Heart left ventricle (tissue), 16 donors: ENCODE measurements at regions of chr2 and their contacts with region 1.

Region 1: GRCh38 chr2:119753041-119753929 is 6.4 kb upstream of the PTPN4 start:
- DNase-seq: no peak
- ATAC-seq: peak; percentile 58 to 72 (median 61)
- H3K4me3 ChIP-seq: no peak overlapping the region
- H3K27ac ChIP-seq: no peak overlapping the region
- H3K4me1 ChIP-seq: peaks cover 0 to 10% (median 1%) of the 10 kb centered on the region in 12 donors
- H3K27me3 ChIP-seq: no peaks in the 10 kb centered on the region
- CTCF ChIP-seq: peak; percentile 67 to 86 (median 79)
- POLR2A ChIP-seq: no peak

Region 2: DNA sequence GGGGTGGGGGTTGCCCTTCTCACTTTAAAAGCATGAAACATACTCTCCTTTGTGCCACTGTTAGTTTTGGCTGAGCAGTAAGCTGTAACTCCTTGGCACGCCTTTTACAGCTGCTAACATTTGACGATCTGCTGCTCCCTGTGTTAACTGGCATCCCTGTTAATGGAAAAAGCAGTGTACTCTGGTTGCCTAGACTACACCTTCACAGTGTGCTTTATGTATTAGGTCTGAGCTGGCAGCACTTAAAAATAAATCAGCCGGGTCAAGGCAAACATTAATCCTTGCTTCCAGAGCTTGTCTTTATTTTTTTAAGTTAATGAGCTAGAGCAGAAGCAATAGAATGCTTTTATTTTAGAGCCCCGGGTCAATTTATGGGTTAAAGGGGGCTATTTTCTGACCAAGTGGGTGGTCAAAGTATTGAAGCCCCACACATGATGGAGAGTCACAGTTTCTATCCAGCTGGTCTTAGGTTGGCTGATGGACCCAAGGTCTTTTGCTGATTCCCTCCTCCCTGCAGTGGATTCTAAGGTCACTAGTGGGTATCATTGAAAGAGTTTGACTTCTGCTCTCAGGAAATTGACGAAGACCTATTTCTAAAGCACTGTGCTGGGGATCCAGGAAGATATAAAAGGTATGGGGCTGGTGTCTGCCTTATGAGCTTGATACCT is 154.6 kb before region 1 on chr2:
- intact Hi-C with region 1: no loop called
- DNase-seq: no peak
- ATAC-seq: peak; percentile 73 to 88 (median 76)
- H3K4me3 ChIP-seq: no peak overlapping the region
- H3K27ac ChIP-seq: peak overlapping the region in 8 of 12 donors; percentile 29 to 82 (median 64)
- H3K4me1 ChIP-seq: peaks cover 0 to 36% (median 2%) of the 10 kb centered on the region in 12 donors
- H3K27me3 ChIP-seq: no peaks in the 10 kb centered on the region
- CTCF ChIP-seq: no peak
- POLR2A ChIP-seq: no peak

Region 3: GRCh38 chr2:119702918-119703401 is 50.3 kb before region 1 on chr2:
- intact Hi-C with region 1: loop called in 2 of 10 experiments (anchors 5 to 10 kb)
- DNase-seq: peak; percentile 64 to 86 (median 66)
- ATAC-seq: peak; percentile 79 to 91 (median 90)
- H3K4me3 ChIP-seq: no peak overlapping the region
- H3K27ac ChIP-seq: no peak overlapping the region
- H3K4me1 ChIP-seq: peaks cover 0 to 25% (median 3%) of the 10 kb centered on the region in 12 donors
- H3K27me3 ChIP-seq: no peaks in the 10 kb centered on the region
- CTCF ChIP-seq: peak; percentile 85 to 96 (median 92)
- POLR2A ChIP-seq: no peak

Region 4: GRCh38 chr2:119721462-119721861 is 31.8 kb before region 1 on chr2:
- intact Hi-C with region 1: no loop called
- DNase-seq: peak in 3 of 5 donors; percentile 27 to 56 (median 27)
- ATAC-seq: peak; percentile 88 to 96 (median 92)
- H3K4me3 ChIP-seq: no peak overlapping the region
- H3K27ac ChIP-seq: peak overlapping the region in 6 of 12 donors; percentile 5 to 45 (median 22)
- H3K4me1 ChIP-seq: peaks cover 0 to 7% (median 0%) of the 10 kb centered on the region in 12 donors
- H3K27me3 ChIP-seq: no peaks in the 10 kb centered on the region
- CTCF ChIP-seq: peak in 6 of 12 donors; percentile 7 to 36 (median 24)
- POLR2A ChIP-seq: no peak

Region 5: GRCh38 chr2:119826370-119826961 is 73.2 kb after region 1 on chr2:
- intact Hi-C with region 1: loop called (anchors 1 to 5 kb)
- DNase-seq: no peak
- ATAC-seq: peak in 3 of 4 donors; percentile 62 to 70 (median 64)
- H3K4me3 ChIP-seq: no peak overlapping the region
- H3K27ac ChIP-seq: no peak overlapping the region
- H3K4me1 ChIP-seq: peaks cover 0 to 14% (median 5%) of the 10 kb centered on the region in 12 donors
- H3K27me3 ChIP-seq: no peaks in the 10 kb centered on the region
- CTCF ChIP-seq: peak; percentile 40 to 66 (median 52)
- POLR2A ChIP-seq: no peak

Region 6: GRCh38 chr2:119943058-119943457 is 189.8 kb after region 1 on chr2:
- intact Hi-C with region 1: loop called in 3 of 10 experiments (anchors 5 to 10 kb)
- DNase-seq: no peak
- ATAC-seq: peak in 2 of 4 donors; percentile 11 to 54
- H3K4me3 ChIP-seq: no peak overlapping the region
- H3K27ac ChIP-seq: no peak overlapping the region
- H3K4me1 ChIP-seq: peaks cover 0 to 18% (median 2%) of the 10 kb centered on the region in 12 donors
- H3K27me3 ChIP-seq: no peaks in the 10 kb centered on the region
- CTCF ChIP-seq: no peak
- POLR2A ChIP-seq: no peak